ENCODE measurements at regions of chrX and their contacts with region 1.

Region 1: GRCh38 chrX:22159071-22159799 is 113.5 kb upstream of the CBLL2 start:
- DNase-seq: peak in 1 of 2 experiments; percentile 8
- H3K4me3 ChIP-seq: no peak overlapping the region
- H3K27ac ChIP-seq: no peak overlapping the region
- H3K4me1 ChIP-seq: peaks cover 8% of the 10 kb centered on the region
- H3K27me3 ChIP-seq: no peaks in the 10 kb centered on the region
- CTCF ChIP-seq: no peak

Region 2: GRCh38 chrX:22090181-22090580 is 69.1 kb before region 1 on chrX:
- CTCF ChIA-PET with region 1: no interaction called
- POLR2A ChIA-PET with region 1: no interaction called
- intact Hi-C with region 1: no loop called
- DNase-seq: no peak
- H3K4me3 ChIP-seq: no peak overlapping the region
- H3K27ac ChIP-seq: no peak overlapping the region
- H3K4me1 ChIP-seq: no peaks in the 10 kb centered on the region
- H3K27me3 ChIP-seq: no peaks in the 10 kb centered on the region
- CTCF ChIP-seq: no peak

Region 3: GRCh38 chrX:22109442-22109841 is 49.8 kb before region 1 on chrX:
- CTCF ChIA-PET with region 1: no interaction called
- POLR2A ChIA-PET with region 1: no interaction called
- intact Hi-C with region 1: no loop called
- DNase-seq: peak in 1 of 2 experiments; percentile 35
- H3K4me3 ChIP-seq: no peak overlapping the region
- H3K27ac ChIP-seq: no peak overlapping the region
- H3K4me1 ChIP-seq: no peaks in the 10 kb centered on the region
- H3K27me3 ChIP-seq: no peaks in the 10 kb centered on the region
- CTCF ChIP-seq: no peak

Region 4: GRCh38 chrX:22192417-22193060 is 33.3 kb after region 1 on chrX:
- CTCF ChIA-PET with region 1: no interaction called
- POLR2A ChIA-PET with region 1: no interaction called
- intact Hi-C with region 1: no loop called
- DNase-seq: peak in 1 of 2 experiments; percentile 43
- H3K4me3 ChIP-seq: no peak overlapping the region
- H3K27ac ChIP-seq: no peak overlapping the region
- H3K4me1 ChIP-seq: peaks cover 6% of the 10 kb centered on the region; the same call in 1 of the 2 replicates
- H3K27me3 ChIP-seq: no peaks in the 10 kb centered on the region
- CTCF ChIP-seq: peak; percentile 77

Region 5: DNA sequence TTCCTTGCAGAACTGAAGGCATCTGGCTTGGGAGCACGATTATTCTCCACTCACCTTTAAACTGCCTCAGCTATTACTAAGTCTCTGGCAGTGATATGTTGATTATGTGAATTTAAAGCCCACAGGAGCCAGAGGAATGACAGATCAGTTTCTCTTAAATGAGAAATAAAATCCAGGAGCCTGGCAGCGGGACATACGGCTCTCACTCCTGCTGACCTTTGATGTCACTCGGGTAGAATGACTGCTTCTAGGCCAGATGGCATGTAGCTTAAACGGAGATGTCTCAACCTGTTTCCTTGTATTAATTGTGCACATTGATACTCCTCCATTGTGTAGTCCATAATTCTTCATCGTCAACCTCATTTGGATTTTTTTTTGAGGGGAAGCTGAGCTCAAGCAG is 109.5 kb after region 1 on chrX:
- CTCF ChIA-PET with region 1: no interaction called
- POLR2A ChIA-PET with region 1: interaction called, 10 read pairs
- intact Hi-C with region 1: no loop called
- DNase-seq: no peak
- H3K4me3 ChIP-seq: no peak overlapping the region
- H3K27ac ChIP-seq: no peak overlapping the region
- H3K4me1 ChIP-seq: no peaks in the 10 kb centered on the region
- H3K27me3 ChIP-seq: no peaks in the 10 kb centered on the region
- CTCF ChIP-seq: no peak